BJ (cell line): ENCODE measurements at regions of chr12 and their contacts with region 1.

Region 1: GRCh38 chr12:101830367-101831325 is at the start of gene GNPTAB:
- DNase-seq: peak; percentile 24
- H3K4me3 ChIP-seq: peak within 1 kb of the TSS; percentile 97
- H3K27me3 ChIP-seq: no peaks in the 10 kb centered on the region
- CTCF ChIP-seq: peak; percentile 73
- polyA plus RNA-seq, gene GNPTAB: 20.5 and 36.1 TPM in 2 replicates

Region 2: DNA sequence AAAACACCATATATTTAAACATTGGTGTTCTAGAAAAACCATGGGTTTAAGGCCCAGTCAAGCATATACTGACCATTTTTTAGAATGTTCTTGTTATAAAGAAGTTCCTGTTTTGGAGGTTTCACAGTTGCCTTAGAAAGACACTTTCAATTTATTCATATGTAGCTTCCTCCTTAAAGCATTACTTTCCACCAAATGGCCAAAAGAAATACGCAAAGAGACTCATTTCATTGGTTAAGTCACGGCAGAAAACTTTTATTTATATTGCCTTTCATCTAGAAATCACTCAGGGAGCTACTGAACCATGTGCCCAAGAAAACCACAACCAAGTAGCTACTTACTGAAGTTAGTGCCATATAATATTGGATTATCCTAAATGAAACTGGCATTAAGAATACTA is 195.9 kb before region 1 on chr12:
- CTCF ChIA-PET with region 1: no interaction called
- POLR2A ChIA-PET with region 1: no interaction called
- DNase-seq: no peak
- H3K4me3 ChIP-seq: no peak overlapping the region
- H3K27me3 ChIP-seq: no peaks in the 10 kb centered on the region
- CTCF ChIP-seq: no peak

Region 3: GRCh38 chr12:101697197-101697929 is 133.3 kb before region 1 on chr12 and contains the start of gene CHPT1:
- CTCF ChIA-PET with region 1: no interaction called
- POLR2A ChIA-PET with region 1: no interaction called
- DNase-seq: no peak
- H3K4me3 ChIP-seq: peak within 1 kb of the TSS; percentile 74
- H3K27me3 ChIP-seq: no peaks in the 10 kb centered on the region
- CTCF ChIP-seq: no peak
- polyA plus RNA-seq, gene CHPT1: 21.2 and 33.6 TPM in 2 replicates

Region 4: DNA sequence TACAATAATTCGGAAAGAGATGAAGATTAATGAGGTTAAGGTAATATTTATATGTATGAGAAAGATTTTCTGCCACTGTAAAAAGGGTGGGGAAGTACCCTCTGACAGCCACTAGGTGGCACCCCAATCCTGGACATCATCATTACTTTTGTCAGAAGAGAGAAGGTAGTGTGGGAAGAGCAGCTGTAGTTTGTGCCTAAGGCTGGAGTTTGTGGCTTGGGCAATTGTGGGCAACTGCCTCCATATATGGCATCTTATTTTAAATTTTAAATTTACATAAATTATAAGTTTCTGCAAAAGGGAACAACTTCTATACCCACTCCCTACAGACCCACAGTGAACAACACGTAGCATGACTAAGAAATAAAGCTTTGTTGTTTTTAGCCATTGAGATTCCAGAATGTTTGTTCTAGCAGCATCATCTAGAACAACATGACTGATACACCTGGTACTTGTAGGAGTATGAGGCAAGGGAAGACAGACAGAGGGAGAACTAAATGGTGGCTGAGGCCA is 56.9 kb before region 1 on chr12:
- CTCF ChIA-PET with region 1: interaction called, 26 read pairs
- POLR2A ChIA-PET with region 1: no interaction called
- DNase-seq: peak; percentile 11
- H3K4me3 ChIP-seq: no peak overlapping the region
- H3K27me3 ChIP-seq: no peaks in the 10 kb centered on the region
- CTCF ChIP-seq: peak; percentile 80

Region 5: GRCh38 chr12:101780599-101780998 is 50.0 kb before region 1 on chr12:
- CTCF ChIA-PET with region 1: interaction called, 19 read pairs
- POLR2A ChIA-PET with region 1: no interaction called
- DNase-seq: no peak
- H3K4me3 ChIP-seq: no peak overlapping the region
- H3K27me3 ChIP-seq: no peaks in the 10 kb centered on the region
- CTCF ChIP-seq: no peak

Region 6: GRCh38 chr12:101793401-101793800 is 37.2 kb before region 1 on chr12:
- CTCF ChIA-PET with region 1: interaction called, 12 read pairs
- POLR2A ChIA-PET with region 1: no interaction called
- DNase-seq: peak; percentile 31
- H3K4me3 ChIP-seq: no peak overlapping the region
- H3K27me3 ChIP-seq: no peaks in the 10 kb centered on the region
- CTCF ChIP-seq: no peak

Region 7: GRCh38 chr12:101813117-101813516 is 17.5 kb before region 1 on chr12:
- CTCF ChIA-PET with region 1: interaction called, 26 read pairs
- POLR2A ChIA-PET with region 1: no interaction called
- DNase-seq: no peak
- H3K4me3 ChIP-seq: no peak overlapping the region
- H3K27me3 ChIP-seq: no peaks in the 10 kb centered on the region
- CTCF ChIP-seq: no peak

Region 8: GRCh38 chr12:101847325-101847724 is 16.7 kb after region 1 on chr12:
- CTCF ChIA-PET with region 1: interaction called, 39 read pairs
- POLR2A ChIA-PET with region 1: no interaction called
- DNase-seq: no peak
- H3K4me3 ChIP-seq: no peak overlapping the region
- H3K27me3 ChIP-seq: no peaks in the 10 kb centered on the region
- CTCF ChIP-seq: no peak